Activated CD4-positive, alpha-beta memory T cell treated with anti-CD3 and anti-CD28 coated beads for 36 hours (primary cell): ENCODE measurements at regions of chrX and their contacts with region 1.

Region 1: GRCh38 chrX:39772057-39772832 is 325.5 kb downstream of the BCOR start:
- DNase-seq: peak; percentile 86
- H3K4me3 Mint-ChIP-seq: peak overlapping the region; percentile 55
- H3K27ac Mint-ChIP-seq: peak overlapping the region; percentile 98
- H3K4me1 Mint-ChIP-seq: peaks cover 48% of the 10 kb centered on the region
- H3K27me3 Mint-ChIP-seq: no peaks in the 10 kb centered on the region

Region 2: GRCh38 chrX:40175511-40176350 is 403.5 kb after region 1 on chrX:
- CTCF ChIA-PET with region 1: no interaction called
- POLR2A ChIA-PET with region 1: no interaction called
- intact Hi-C with region 1: loop called (anchors 2 kb)
- DNase-seq: peak; percentile 81
- H3K4me3 Mint-ChIP-seq: peak overlapping the region; percentile 90
- H3K27ac Mint-ChIP-seq: peak overlapping the region; percentile 100
- H3K4me1 Mint-ChIP-seq: peaks cover 18% of the 10 kb centered on the region
- H3K27me3 Mint-ChIP-seq: no peaks in the 10 kb centered on the region